K562 (cell line): ENCODE measurements at regions of chr3 and their contacts with region 1.

Region 1: GRCh38 chr3:12706504-12707253 is 42.8 kb upstream of the RAF1 start:
- DNase-seq: peak; percentile 73 to 87 (median 80)
- ATAC-seq: peak; percentile 99
- H3K4me3 ChIP-seq: no peak overlapping the region
- H3K27ac ChIP-seq: no peak overlapping the region
- H3K4me1 ChIP-seq: no peaks in the 10 kb centered on the region
- H3K27me3 ChIP-seq: peaks cover 14 to 33% of the 10 kb centered on the region in 2 experiments
- CTCF ChIP-seq: peak; percentile 95 to 99 (median 99)
- EP300 ChIP-seq: no peak
- POLR2A ChIP-seq: no peak
- RAD21 ChIP-seq: peak; percentile 73 to 95

Region 2: DNA sequence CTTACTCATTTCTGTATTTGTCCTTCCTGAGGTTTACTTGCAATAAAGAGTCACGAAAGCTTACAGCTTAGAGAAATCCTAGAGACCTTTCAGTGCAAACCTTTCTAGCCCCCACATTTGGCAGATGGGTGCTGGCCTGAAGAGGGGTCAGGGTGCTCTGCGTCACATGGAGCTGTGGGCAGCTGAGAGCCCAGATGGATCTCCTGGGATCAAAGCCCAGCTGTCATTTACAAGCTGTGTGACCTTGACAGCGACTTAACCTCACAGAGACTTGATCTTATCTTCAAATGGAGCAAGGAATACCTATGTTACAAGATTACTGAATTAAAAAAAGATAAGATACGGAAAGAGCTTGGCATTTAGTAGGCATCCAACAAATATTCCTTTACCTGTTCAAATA is 18.7 kb before region 1 on chr3:
- CTCF ChIA-PET with region 1: no interaction called
- POLR2A ChIA-PET with region 1: no interaction called
- in situ Hi-C with region 1: no loop called
- intact Hi-C with region 1: no loop called
- DNase-seq: peak in 1 of 4 experiments; percentile 5
- ATAC-seq: peak; percentile 14; the same call in 2 of the 3 replicates
- H3K4me3 ChIP-seq: no peak overlapping the region
- H3K27ac ChIP-seq: no peak overlapping the region
- H3K4me1 ChIP-seq: peaks cover 0 to 16% of the 10 kb centered on the region in 2 experiments; a peak in 2 of 5 replicates
- H3K27me3 ChIP-seq: no peaks in the 10 kb centered on the region
- CTCF ChIP-seq: no peak
- EP300 ChIP-seq: no peak
- POLR2A ChIP-seq: no peak
- RAD21 ChIP-seq: no peak

Region 3: GRCh38 chr3:12768579-12769527 is 62.2 kb after region 1 on chr3:
- CTCF ChIA-PET with region 1: no interaction called
- POLR2A ChIA-PET with region 1: interaction called, 3 read pairs
- in situ Hi-C with region 1: no loop called
- intact Hi-C with region 1: loop called (anchors 1 kb)
- DNase-seq: peak; percentile 28 to 84 (median 68)
- ATAC-seq: peak; percentile 92
- H3K4me3 ChIP-seq: peak overlapping the region; percentile 20; the same call in 1 of the 2 replicates
- H3K27ac ChIP-seq: no peak overlapping the region
- H3K4me1 ChIP-seq: peaks cover 0 to 9% of the 10 kb centered on the region in 2 experiments; a peak in 3 of 5 replicates
- H3K27me3 ChIP-seq: peaks cover 20 to 36% of the 10 kb centered on the region in 2 experiments
- CTCF ChIP-seq: peak in 1 of 3 experiments; percentile 12; a peak in 1 of 6 replicates
- EP300 ChIP-seq: no peak
- POLR2A ChIP-seq: no peak
- RAD21 ChIP-seq: peak in 1 of 2 experiments; percentile 25; a peak in 2 of 4 replicates